Brain microvascular endothelial cell (primary cell): ENCODE measurements at regions of chr6 and their contacts with region 1.

Region 1: DNA sequence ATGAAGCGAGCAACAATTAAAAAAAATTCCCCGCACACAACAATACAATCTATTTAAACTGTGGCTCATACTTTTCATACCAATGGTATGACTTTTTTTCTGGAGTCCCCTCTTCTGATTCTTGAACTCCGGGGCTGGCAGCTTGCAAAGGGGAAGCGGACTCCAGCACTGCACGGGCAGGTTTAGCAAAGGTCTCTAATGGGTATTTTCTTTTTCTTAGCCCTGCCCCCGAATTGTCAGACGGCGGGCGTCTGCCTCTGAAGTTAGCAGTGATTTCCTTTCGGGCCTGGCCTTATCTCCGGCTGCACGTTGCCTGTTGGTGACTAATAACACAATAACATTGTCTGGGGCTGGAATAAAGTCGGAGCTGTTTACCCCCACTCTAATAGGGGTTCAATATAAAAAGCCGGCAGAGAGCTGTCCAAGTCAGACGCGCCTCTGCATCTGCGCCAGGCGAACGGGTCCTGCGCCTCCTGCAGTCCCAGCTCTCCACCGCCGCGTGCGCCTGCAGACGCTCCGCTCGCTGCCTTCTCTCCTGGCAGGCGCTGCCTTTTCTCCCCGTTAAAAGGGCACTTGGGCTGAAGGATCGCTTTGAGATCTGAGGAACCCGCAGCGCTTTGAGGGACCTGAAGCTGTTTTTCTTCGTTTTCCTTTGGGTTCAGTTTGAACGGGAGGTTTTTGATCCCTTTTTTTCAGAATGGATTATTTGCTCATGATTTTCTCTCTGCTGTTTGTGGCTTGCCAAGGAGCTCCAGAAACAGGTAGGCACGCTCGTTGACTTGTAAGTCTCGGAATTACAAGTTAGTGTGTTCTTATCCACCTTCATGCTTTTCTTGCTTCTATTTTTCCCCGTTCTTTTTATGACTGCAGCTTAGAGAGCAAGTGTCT is at the start of gene EDN1:
- DNase-seq: peak; percentile 93
- H3K4me3 ChIP-seq: peak within 1 kb of the TSS; percentile 67
- H3K27ac ChIP-seq: peak within 1 kb of the TSS; percentile 81
- H3K27me3 ChIP-seq: no peaks in the 10 kb centered on the region
- CTCF ChIP-seq: peak; percentile 73

Region 2: GRCh38 chr6:11912426-11912825 is 377.8 kb before region 1 on chr6:
- in situ Hi-C with region 1: no loop called
- DNase-seq: no peak
- H3K4me3 ChIP-seq: no peak overlapping the region
- H3K27ac ChIP-seq: no peak overlapping the region
- H3K27me3 ChIP-seq: no peaks in the 10 kb centered on the region
- CTCF ChIP-seq: peak; percentile 29

Region 3: GRCh38 chr6:12605888-12606345 is 315.7 kb after region 1 on chr6:
- in situ Hi-C with region 1: loop called (anchors 25 kb)
- DNase-seq: peak; percentile 63
- H3K4me3 ChIP-seq: no peak overlapping the region
- H3K27ac ChIP-seq: no peak overlapping the region
- H3K27me3 ChIP-seq: no peaks in the 10 kb centered on the region
- CTCF ChIP-seq: peak; percentile 80